ENCODE measurements at regions of chr1 and their contacts with region 1.

Region 1: GRCh38 chr1:77779529-77780281 is at the start of gene MIGA1:
- DNase-seq: peak; percentile 84 to 96 (median 94)
- H3K4me3 ChIP-seq: peak within 1 kb of the TSS; percentile 77 to 98 (median 89)
- H3K27ac ChIP-seq: peak within 1 kb of the TSS in 57 of 59 donors; percentile 5 to 91 (median 77)
- H3K27me3 ChIP-seq: no peaks in the 10 kb centered on the region
- CTCF ChIP-seq: peak in 20 of 56 donors; percentile 10 to 52 (median 22)
- total RNA-seq, gene MIGA1: 33.7 to 74.8 (median 59.0) TPM

Region 2: GRCh38 chr1:77759071-77760028 is 20.4 kb before region 1 on chr1 and contains the start of gene USP33:
- intact Hi-C with region 1: loop called in 1 of 2 experiments (anchors 2 kb)
- DNase-seq: peak; percentile 69 to 94 (median 85)
- H3K4me3 ChIP-seq: peak within 1 kb of the TSS; percentile 65 to 100 (median 94)
- H3K27ac ChIP-seq: peak within 1 kb of the TSS in 58 of 59 donors; percentile 19 to 96 (median 86)
- H3K27me3 ChIP-seq: no peaks in the 10 kb centered on the region
- CTCF ChIP-seq: peak in 26 of 56 donors; percentile 4 to 46 (median 24)
- total RNA-seq, gene USP33: 66.3 to 161 (median 125) TPM